ENCODE measurements at regions of chr22 and their contacts with region 1.

Region 1: GRCh38 chr22:18077639-18078328 is at the start of gene PEX26:
- H3K4me3 Mint-ChIP-seq: peak within 1 kb of the TSS; percentile 94
- H3K27ac Mint-ChIP-seq: peak within 1 kb of the TSS; percentile 95
- H3K4me1 Mint-ChIP-seq: peaks cover 46% of the 10 kb centered on the region
- H3K27me3 Mint-ChIP-seq: no peaks in the 10 kb centered on the region

Region 2: DNA sequence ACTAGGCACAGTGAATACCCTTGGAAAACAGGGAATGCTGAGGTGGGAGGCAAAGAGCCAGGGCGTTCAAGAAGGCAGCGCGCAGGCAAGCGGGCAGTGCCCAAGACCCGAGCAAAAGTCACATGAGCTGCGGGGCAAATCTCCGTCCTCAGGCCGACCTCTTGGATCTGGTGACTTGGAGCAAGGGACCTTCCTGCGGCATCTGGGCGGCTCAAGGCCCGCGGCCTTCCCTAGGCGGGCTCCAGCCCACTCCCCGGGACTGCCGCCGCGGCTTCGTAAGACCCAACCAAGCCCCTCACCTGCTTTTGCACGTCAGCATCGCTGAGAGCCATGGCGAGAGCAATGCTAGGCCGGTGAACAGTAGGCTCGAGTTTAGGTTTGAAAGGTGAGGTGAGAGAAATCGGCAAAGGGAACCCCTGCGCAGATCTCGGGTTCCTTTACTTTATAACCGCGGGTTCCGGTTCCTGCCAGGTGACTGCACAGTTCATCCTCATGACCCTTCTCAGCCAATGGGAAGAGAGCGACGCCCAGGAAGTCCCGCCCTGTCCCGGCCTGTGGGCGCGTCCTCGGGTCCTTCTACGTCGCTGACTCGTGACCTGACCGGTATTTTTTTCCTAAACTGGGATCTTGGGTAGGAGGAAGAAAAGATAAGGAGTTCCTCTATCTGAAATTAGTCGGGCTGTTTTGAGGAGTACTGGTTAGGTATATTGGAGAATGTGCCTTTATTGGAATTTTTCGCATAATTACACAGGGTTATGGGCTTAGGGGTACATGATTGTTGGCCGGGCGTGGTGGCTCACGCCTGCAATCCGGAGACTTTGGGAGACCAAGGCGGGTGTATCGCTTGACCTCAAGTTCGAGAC is 449.2 kb before region 1 on chr22 and contains the start of gene ATP6V1E1:
- intact Hi-C with region 1: loop called (anchors 5 kb)
- H3K4me3 Mint-ChIP-seq: peak within 1 kb of the TSS; percentile 88
- H3K27ac Mint-ChIP-seq: peak within 1 kb of the TSS; percentile 95
- H3K4me1 Mint-ChIP-seq: peaks cover 31% of the 10 kb centered on the region
- H3K27me3 Mint-ChIP-seq: no peaks in the 10 kb centered on the region

Region 3: DNA sequence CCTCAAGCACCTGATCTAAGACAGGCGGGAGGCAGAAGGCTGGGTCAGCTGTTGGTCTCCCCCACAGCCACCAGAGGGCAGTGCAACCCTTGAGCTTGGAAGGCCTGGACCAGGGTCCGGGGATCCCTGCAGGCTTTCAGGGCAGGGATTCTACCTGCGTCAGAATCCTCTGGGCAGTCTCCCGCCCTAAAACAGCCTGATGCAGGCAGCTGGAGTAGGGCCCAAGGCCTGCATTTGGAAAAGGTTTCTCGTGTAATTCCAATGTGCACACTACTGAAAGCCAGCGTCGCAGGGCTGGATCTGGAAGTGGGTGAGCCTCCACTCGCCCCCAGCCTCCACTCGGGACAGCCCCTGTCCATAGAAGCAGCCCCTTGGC is 335.3 kb before region 1 on chr22:
- intact Hi-C with region 1: loop called (anchors 5 kb)
- H3K4me3 Mint-ChIP-seq: no peak overlapping the region
- H3K27ac Mint-ChIP-seq: peak overlapping the region; percentile 13
- H3K4me1 Mint-ChIP-seq: peaks cover 3% of the 10 kb centered on the region
- H3K27me3 Mint-ChIP-seq: no peaks in the 10 kb centered on the region

Region 4: DNA sequence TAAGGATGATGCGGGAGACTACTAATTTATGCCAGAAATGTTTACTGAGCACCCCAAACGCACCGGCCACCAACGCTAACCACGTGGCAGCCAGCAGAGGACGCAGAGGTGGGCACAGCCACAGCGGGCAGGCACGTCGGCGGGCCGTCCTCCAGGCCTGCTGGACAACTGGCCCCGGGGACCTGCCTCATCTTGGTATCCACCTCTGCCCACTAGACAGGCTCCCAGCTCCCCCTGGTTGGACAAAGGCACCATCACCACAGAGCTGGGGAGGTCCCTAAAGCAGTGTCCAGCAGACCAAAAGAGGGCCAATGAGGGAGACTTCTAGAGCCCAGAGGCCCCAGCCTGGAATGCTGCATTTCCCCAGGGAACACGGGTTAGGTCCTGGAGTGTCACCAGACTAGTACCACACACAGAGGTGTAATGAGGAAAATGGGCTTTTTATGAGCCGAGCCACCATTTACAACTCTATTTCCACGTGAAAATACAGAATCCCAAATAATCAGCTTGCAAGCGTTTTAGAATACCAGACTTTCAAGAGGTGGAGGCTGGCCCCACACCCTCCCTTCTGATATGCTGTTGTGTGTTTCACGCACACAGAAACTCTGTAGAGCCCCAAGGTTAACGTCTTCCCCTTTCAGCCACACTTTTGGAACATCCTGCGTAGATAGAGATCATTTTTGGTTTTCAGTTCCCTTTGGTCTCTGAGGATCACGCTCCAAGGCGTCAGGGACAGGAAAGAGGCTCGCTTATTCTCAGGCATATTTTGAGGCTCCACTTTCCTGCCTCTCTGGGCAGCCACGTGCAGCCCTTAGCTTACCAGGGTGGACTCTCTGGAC is 279.8 kb before region 1 on chr22:
- intact Hi-C with region 1: loop called (anchors 1 kb)
- H3K4me3 Mint-ChIP-seq: no peak overlapping the region
- H3K27ac Mint-ChIP-seq: peak overlapping the region; percentile 38
- H3K4me1 Mint-ChIP-seq: peaks cover 55% of the 10 kb centered on the region
- H3K27me3 Mint-ChIP-seq: peaks cover 11% of the 10 kb centered on the region

Region 5: DNA sequence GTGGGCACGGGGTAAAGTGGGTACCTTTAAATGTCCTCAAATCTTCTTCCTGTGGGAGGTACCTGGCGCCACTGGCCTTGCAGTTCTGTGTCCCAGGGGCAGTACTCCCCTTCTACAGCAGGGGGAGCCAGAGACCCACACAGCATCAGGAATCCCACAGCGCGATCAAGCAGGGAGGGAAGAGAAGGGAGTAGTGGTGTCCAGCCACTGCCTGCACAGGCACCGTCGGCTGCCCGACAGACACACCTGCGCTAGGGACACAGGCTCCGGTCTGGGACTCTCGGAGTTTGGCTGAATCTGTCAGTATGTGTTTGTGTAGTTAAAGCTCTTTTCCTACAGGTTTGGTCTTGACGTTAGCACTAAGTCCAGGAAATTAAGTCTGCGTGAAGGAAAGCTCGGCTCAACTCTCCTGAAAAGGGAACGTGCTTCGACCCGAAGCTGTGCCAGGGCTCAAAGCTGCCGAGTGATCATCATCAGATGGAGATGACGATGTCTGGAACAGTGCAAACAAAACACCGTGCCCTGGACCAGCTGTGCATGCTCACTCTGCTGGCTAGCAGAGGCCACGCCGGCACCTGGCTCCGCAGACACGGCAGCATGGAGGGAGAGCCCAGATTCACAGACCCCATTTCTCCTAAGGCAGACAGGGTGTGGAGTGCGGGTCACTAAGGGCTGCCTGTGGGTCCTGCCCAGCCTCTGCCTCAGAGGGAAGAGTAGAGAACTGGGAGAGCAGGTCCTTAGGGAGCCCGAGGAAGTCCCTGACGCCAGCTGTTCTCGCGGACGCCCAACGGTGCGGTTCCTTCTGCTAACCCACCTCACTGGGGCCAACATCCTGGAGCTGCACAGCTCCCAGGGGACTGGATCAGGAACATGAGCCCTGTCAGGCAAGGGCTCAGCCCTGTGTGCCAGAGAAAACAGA is 247.5 kb before region 1 on chr22:
- intact Hi-C with region 1: loop called (anchors 1 kb)
- H3K4me3 Mint-ChIP-seq: no peak overlapping the region
- H3K27ac Mint-ChIP-seq: no peak overlapping the region
- H3K4me1 Mint-ChIP-seq: peaks cover 5% of the 10 kb centered on the region
- H3K27me3 Mint-ChIP-seq: no peaks in the 10 kb centered on the region

Region 6: DNA sequence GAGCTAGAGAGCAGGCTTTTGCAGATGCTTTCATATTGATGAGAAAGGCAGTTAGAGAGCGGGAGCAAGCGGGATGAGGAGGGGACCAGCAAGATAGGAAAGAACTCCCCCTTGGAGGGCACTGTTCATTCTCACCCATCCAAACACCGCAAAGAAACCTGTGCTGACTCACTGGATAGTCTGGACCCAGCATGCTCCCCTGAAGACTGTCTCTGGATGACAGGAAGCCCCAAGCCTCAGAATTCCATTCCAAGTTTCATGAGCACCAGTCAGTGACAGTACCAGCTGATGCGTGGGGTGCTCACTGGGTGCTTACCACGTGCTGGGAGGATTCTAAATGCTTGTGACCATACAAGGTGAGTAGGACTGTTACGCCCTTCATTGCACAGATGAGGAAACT is 87.6 kb before region 1 on chr22:
- intact Hi-C with region 1: no loop called
- H3K4me3 Mint-ChIP-seq: no peak overlapping the region
- H3K27ac Mint-ChIP-seq: no peak overlapping the region
- H3K4me1 Mint-ChIP-seq: no peaks in the 10 kb centered on the region
- H3K27me3 Mint-ChIP-seq: no peaks in the 10 kb centered on the region

Region 7: DNA sequence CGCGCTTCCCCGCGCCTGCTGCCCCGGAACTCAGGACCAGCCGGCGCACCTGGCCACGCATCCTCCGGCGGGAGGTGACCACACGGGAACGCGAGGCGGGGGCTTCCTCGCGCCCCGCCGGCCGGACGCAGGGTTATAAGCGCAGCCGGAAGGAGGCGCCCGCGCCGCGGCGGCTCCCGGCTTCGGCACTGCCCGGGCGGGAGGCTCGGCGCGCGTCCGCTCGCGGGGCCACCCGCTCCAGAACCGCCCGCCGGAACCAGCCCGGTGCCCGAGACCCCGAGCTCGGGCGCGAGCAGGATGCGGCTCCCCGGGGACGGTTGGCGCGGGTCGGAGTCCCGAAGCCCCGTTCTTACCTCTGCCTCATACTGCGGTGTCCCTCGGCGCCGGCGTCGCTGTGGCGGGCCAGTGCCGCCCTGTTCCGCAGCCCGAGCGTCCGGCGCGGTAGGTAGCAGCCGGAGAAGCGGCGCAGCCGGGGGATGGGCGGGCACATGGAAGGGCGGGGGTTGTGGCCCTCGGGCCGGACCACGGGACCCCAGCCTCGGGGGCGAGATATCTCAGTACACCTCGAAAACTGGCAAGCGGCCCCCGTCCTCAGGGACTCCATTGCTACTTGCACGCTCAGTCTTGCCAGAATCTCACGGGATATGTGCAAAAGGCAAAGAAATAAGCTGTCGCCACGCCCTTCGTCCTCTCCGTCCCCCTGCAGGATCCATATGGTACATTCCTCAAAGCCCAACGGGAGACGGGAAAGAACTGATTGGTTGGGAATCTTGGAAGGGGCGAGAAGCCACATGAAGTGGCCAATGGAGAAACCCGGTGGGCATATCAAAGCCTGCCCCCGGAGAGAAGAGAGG is 76.5 kb before region 1 on chr22:
- intact Hi-C with region 1: loop called (anchors 5 kb)
- H3K4me3 Mint-ChIP-seq: peak overlapping the region; percentile 80
- H3K27ac Mint-ChIP-seq: peak overlapping the region; percentile 86
- H3K4me1 Mint-ChIP-seq: peaks cover 18% of the 10 kb centered on the region
- H3K27me3 Mint-ChIP-seq: peaks cover 48% of the 10 kb centered on the region